A549 (cell line): ENCODE measurements at regions of chr9 and their contacts with region 1.

Region 1: GRCh38 chr9:4327504-4328191 is 27.8 kb upstream of the GLIS3 start:
- DNase-seq: no peak
- ATAC-seq: peak; percentile 38 to 40; a peak in 5 of 6 replicates
- H3K4me3 ChIP-seq: no peak overlapping the region
- H3K27ac ChIP-seq: no peak overlapping the region
- H3K4me1 ChIP-seq: peaks cover 7% of the 10 kb centered on the region; the same call in 1 of the 3 replicates
- CTCF ChIP-seq: no peak
- EP300 ChIP-seq: no peak
- POLR2A ChIP-seq: no peak
- RAD21 ChIP-seq: no peak

Region 2: DNA sequence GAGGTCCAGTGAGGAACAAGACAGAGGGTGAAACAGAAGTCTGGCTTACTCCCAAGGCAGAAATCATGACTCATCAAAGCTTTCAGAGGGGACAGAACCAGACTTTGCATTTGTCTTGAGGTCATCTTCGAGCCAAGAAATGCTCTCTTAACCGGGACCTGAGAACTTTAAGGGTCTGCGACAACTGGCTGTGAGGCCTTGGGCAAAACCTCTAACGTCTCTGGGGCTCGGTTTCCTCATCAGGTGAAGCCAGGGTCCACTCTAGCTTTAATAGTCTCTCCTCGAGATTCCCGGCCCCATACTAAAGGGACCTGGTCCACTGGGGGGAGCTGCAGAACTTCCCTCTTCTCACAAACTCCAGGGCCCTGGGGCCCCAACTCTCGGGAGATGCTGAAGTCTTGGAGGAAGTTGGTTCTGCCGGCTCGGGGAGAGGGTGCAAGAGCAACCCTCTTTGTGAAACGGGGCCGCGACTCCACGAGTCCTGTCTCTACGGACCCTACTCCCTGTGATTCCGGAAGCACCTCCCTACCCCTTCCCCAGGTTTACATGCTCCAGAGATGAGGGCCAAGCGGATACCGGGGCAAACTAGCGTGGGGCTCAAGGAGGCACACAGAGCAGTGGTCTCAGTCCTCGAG is 30.4 kb before region 1 on chr9:
- CTCF ChIA-PET with region 1: interaction called, 10 read pairs
- POLR2A ChIA-PET with region 1: interaction called, 4 read pairs
- DNase-seq: peak; percentile 87 to 92
- ATAC-seq: peak; percentile 60 to 73
- H3K4me3 ChIP-seq: peak overlapping the region; percentile 77
- H3K27ac ChIP-seq: peak overlapping the region; percentile 95 to 97
- H3K4me1 ChIP-seq: peaks cover 64% of the 10 kb centered on the region
- CTCF ChIP-seq: peak; percentile 64
- EP300 ChIP-seq: no peak
- POLR2A ChIP-seq: no peak; the same call in 1 of the 2 replicates
- RAD21 ChIP-seq: peak; percentile 60 to 65